ENCODE measurements at regions of chr6 and their contacts with region 1.

Region 1: DNA sequence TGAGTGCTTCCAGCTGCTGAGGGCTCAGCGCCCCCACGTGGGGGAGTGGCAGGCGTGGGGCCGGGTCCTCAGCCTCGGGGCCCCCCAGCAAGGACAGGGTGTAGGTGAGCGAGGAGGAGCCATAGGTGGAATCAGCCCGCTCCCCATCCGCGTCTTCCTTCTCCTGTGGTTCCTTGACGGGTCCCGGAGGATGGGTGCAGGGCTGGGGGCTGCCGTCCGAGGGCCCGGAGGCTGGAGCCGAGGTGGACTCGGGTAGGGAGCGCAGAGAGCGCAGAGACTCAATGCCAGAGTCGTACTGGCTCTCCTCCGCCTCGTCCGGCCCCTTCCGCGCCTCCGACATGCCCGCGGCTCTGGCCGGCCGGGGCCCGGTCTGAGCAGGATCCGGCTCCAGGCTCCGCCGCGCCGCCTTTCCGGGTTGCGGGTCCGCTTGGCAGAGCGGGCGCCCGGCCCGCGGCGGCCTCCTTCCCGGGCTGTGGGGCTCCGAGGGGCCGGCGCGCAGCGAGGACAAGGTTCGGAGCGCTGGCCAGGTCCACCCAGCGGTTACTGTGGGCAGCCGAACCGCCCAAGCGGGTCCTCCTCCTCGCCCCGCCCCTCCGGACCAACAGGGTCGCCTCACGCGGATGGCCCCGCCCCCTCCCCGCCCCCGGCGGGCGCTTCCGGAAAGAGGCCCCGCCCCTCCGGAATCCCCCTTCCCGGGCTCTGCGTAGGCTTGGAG is at the start of gene NFKBIE:
- DNase-seq: peak; percentile 92
- H3K4me3 ChIP-seq: peak within 1 kb of the TSS; percentile 37 to 78 (median 63)
- H3K27ac ChIP-seq: peak within 1 kb of the TSS; percentile 76
- H3K4me1 ChIP-seq: peaks cover 36% of the 10 kb centered on the region
- H3K27me3 ChIP-seq: peaks cover 11 to 19% of the 10 kb centered on the region in 2 experiments
- CTCF ChIP-seq: peak; percentile 26 to 46
- POLR2A ChIP-seq: peak; percentile 92
- total RNA-seq, gene NFKBIE: 15.6 and 19.0 TPM in 2 replicates

Region 2: GRCh38 chr6:44028789-44029310 is 236.3 kb before region 1 on chr6:
- CTCF ChIA-PET with region 1: no interaction called
- POLR2A ChIA-PET with region 1: no interaction called
- dilution Hi-C with region 1: no loop called
- intact Hi-C with region 1: no loop called
- DNase-seq: no peak
- H3K4me3 ChIP-seq: no peak overlapping the region
- H3K27ac ChIP-seq: no peak overlapping the region
- H3K4me1 ChIP-seq: no peaks in the 10 kb centered on the region
- H3K27me3 ChIP-seq: peaks cover 12 to 13% of the 10 kb centered on the region in 2 experiments
- CTCF ChIP-seq: peak in 1 of 2 donors; percentile 3
- POLR2A ChIP-seq: no peak

Region 3: GRCh38 chr6:44275749-44276648 is 10.8 kb after region 1 on chr6:
- CTCF ChIA-PET with region 1: interaction called, 12 read pairs
- POLR2A ChIA-PET with region 1: no interaction called
- dilution Hi-C with region 1: no loop called
- intact Hi-C with region 1: no loop called
- DNase-seq: no peak
- H3K4me3 ChIP-seq: no peak overlapping the region
- H3K27ac ChIP-seq: no peak overlapping the region
- H3K4me1 ChIP-seq: no peaks in the 10 kb centered on the region
- H3K27me3 ChIP-seq: peaks cover 28 to 42% of the 10 kb centered on the region in 2 experiments
- CTCF ChIP-seq: no peak
- POLR2A ChIP-seq: no peak

Region 4: DNA sequence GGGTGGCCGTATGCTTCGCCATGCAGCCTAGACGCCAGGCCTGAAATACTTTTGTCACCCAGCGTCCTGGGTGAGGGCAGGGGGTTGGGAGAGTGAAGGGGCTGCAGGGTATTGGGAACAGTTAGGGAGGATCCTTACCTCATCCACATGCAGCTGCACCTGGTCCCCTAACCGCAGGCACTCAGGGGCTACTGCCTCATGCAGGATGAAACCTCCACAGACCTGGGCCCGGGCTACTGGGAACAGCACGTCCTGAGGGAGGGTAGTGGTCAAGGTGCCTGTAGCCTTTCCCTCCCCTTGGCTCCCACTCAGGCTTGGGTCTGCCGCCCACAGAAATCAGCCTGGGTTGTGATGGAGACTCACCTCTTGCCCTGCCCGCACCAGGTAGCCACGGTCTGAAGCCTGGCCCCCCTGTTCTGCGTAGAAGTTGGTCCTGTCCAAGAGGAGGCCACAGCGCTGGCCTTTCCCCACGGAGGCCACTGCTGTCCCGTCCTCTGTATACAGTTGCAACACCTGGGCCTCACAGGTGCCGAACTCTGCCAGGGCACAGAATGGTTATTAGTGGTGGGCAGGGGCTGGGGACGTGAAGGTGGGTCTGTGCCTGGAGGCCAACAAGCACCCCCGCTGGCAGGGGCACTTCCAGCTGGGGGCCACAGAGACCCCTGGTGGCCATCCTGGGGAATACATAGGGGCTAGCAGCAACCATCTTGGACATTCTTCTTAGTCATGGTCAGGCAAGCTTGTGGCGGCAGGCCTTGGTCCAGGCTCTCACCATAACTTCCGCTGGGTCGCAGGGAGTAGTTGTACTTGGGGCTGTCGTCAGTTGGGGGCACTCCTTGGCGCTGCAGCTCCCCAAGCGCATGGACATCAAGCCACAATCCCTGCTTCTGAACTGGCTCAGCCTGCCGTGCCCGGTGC is 39.4 kb after region 1 on chr6:
- CTCF ChIA-PET with region 1: interaction called, 83 read pairs
- POLR2A ChIA-PET with region 1: interaction called, 3 read pairs
- dilution Hi-C with region 1: no loop called
- intact Hi-C with region 1: loop called (anchors 1 kb)
- DNase-seq: peak; percentile 41
- H3K4me3 ChIP-seq: no peak overlapping the region
- H3K27ac ChIP-seq: no peak overlapping the region
- H3K4me1 ChIP-seq: no peaks in the 10 kb centered on the region
- H3K27me3 ChIP-seq: no peaks in the 10 kb centered on the region
- CTCF ChIP-seq: peak; percentile 80 to 84
- POLR2A ChIP-seq: no peak

Region 5: DNA sequence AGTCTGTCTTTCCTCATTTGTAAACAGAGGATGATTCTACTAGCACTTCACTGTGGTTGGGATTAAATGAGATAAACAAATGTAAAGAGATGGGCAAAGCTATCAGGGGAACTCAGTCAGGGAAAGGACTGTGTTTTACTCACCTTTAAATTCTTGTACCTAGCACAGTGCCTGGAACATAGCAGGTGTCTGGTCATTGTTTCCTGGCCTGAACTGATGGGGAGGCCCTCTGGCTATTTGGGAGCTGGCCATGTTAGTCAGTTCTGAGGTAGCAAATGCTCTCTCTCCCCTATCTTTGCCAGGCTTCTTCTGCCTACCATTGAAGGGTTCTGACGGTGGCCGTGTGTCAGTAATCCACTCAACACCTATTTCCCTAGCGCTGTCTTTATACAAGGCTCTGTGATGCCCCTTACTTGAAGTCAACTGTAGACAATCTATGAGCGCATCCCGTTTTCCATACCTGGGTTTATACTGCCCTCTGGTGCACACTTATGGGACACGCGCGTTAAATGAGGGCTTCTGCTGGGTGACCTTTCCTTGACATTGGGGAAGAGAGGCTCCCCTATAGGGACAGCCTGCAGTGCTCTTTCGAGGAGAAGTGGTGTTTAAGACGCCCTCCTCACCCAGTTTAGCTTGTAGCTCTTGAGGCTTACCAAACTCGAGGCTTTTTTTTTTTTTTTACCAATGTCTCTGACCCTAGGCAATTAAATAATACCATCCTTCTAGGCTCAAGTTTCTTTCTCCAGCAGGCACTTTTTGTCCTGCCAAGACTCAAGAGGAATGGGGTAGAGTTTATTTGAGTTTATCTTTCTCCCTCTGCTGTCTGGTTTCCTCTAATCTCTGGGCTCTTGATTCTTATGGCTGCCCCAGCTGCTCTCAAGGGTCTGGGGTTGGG is 73.3 kb after region 1 on chr6:
- CTCF ChIA-PET with region 1: interaction called, 154 read pairs
- POLR2A ChIA-PET with region 1: no interaction called
- dilution Hi-C with region 1: no loop called
- intact Hi-C with region 1: loop called (anchors 1 kb)
- DNase-seq: peak; percentile 63
- H3K4me3 ChIP-seq: no peak overlapping the region
- H3K27ac ChIP-seq: no peak overlapping the region
- H3K4me1 ChIP-seq: no peaks in the 10 kb centered on the region
- H3K27me3 ChIP-seq: peaks cover 28 to 44% of the 10 kb centered on the region in 2 experiments
- CTCF ChIP-seq: peak; percentile 57 to 72
- POLR2A ChIP-seq: no peak

Region 6: GRCh38 chr6:44456070-44456965 is 191.2 kb after region 1 on chr6:
- CTCF ChIA-PET with region 1: interaction called, 12 read pairs
- POLR2A ChIA-PET with region 1: no interaction called
- dilution Hi-C with region 1: no loop called
- intact Hi-C with region 1: loop called (anchors 1 kb)
- DNase-seq: peak; percentile 63
- H3K4me3 ChIP-seq: peak overlapping the region in 2 of 3 experiments; percentile 19 to 50
- H3K27ac ChIP-seq: peak overlapping the region; percentile 8
- H3K4me1 ChIP-seq: peaks cover 23% of the 10 kb centered on the region
- H3K27me3 ChIP-seq: peaks cover 0 to 3% of the 10 kb centered on the region in 2 experiments
- CTCF ChIP-seq: peak; percentile 74 to 81
- POLR2A ChIP-seq: no peak